SK-N-SH (cell line): ENCODE measurements at regions of chr17 and their contacts with region 1.

Region 1: GRCh38 chr17:66727639-66728570 is 107.0 kb upstream of the CACNG5 start:
- DNase-seq: peak; percentile 87
- H3K4me3 ChIP-seq: no peak overlapping the region; a peak in 1 of 4 replicates
- H3K27ac ChIP-seq: peak overlapping the region in 1 of 2 experiments; percentile 36; a peak in 2 of 4 replicates
- H3K4me1 ChIP-seq: peaks cover 9 to 25% of the 10 kb centered on the region in 2 experiments; a peak in 1 of 4 replicates
- H3K27me3 ChIP-seq: no peaks in the 10 kb centered on the region
- CTCF ChIP-seq: peak; percentile 70
- EP300 ChIP-seq: no peak
- RAD21 ChIP-seq: peak; percentile 93

Region 2: DNA sequence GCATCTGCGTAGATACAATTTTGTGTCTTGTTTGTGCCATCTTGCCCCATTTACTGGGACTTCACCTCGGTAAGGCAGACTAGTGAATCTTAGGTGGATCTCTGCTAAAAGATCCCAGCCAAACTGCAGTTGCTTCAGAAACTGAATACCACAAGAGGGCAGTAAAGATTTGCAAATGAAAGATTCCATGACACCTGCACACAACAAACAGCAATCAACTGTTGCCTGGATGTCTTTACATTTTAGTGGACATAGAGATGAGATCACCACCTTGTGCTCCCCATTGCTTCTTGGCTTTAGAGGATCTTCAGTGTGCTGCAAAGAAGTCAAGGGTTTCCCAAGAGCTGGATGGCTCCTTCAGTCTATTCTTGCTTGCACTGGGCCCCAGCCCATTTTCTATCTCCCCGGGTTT is 12.2 kb before region 1 on chr17:
- CTCF ChIA-PET with region 1: interaction called, 35 read pairs
- POLR2A ChIA-PET with region 1: no interaction called
- DNase-seq: peak; percentile 74
- H3K4me3 ChIP-seq: no peak overlapping the region
- H3K27ac ChIP-seq: no peak overlapping the region
- H3K4me1 ChIP-seq: peaks cover 0 to 22% of the 10 kb centered on the region in 2 experiments; a peak in 1 of 4 replicates
- H3K27me3 ChIP-seq: no peaks in the 10 kb centered on the region
- CTCF ChIP-seq: peak; percentile 82
- EP300 ChIP-seq: peak in 1 of 2 experiments; percentile 16; a peak in 1 of 4 replicates
- RAD21 ChIP-seq: peak; percentile 98

Region 3: GRCh38 chr17:66829386-66829864 is 101.5 kb after region 1 on chr17:
- CTCF ChIA-PET with region 1: interaction called, 12 read pairs
- POLR2A ChIA-PET with region 1: no interaction called
- DNase-seq: no peak
- H3K4me3 ChIP-seq: no peak overlapping the region
- H3K27ac ChIP-seq: no peak overlapping the region
- H3K4me1 ChIP-seq: peaks cover 4 to 19% of the 10 kb centered on the region in 2 experiments; a peak in 2 of 4 replicates
- H3K27me3 ChIP-seq: peaks cover 23% of the 10 kb centered on the region
- CTCF ChIP-seq: no peak
- EP300 ChIP-seq: no peak
- RAD21 ChIP-seq: no peak

Region 4: GRCh38 chr17:66879612-66880011 is 151.7 kb after region 1 on chr17:
- CTCF ChIA-PET with region 1: interaction called, 10 read pairs
- POLR2A ChIA-PET with region 1: no interaction called
- DNase-seq: no peak
- H3K4me3 ChIP-seq: no peak overlapping the region
- H3K27ac ChIP-seq: no peak overlapping the region
- H3K4me1 ChIP-seq: no peaks in the 10 kb centered on the region
- H3K27me3 ChIP-seq: 0 out of 2 replicates have a peak, but pooled peaks cover 16% of the 10 kb centered on the region
- CTCF ChIP-seq: no peak
- EP300 ChIP-seq: no peak
- RAD21 ChIP-seq: no peak

Region 5: DNA sequence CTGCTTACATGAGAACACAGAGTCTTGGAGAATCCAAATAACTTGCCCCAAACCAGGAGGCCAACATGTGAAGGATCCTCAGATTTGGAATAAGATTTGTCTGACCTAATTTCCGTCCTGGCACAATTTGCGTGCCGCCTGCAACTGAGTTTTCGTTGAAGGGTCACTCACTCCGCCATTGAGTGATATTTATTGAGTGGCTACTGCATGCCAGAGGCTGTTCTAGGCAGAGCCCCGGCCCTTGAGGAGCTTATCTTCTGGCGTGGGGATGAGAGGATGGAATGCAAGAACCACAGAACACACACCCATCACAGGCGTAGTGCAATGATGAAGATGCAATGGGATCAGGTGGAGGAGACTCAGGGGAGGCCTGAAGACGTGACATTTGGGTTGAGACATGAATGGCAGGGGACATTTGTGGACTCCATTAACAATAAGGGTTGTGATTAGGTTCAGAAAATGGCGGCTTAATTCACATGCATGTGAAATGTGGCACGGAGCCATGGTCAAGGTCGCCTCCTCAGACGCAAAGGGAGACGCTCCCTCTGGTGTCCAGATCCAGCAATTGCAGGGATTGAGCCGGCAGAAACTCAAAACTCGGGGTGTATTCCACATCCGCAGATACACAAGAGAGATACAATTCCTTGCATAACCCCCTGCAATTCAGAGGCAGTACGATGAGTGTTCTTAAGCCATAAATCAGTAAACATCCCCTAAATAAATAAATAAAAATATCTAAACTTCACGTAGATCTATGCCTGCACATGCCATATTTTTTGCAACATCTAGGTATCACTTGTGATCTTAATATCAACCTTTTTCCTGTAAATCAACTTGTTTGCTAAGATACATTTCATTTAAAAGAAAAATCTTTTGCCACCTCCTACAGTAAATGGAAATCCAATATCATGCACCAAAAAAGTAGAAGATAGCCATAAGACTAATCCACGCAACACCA is 178.7 kb after region 1 on chr17:
- CTCF ChIA-PET with region 1: interaction called, 460 read pairs
- POLR2A ChIA-PET with region 1: interaction called, 6 read pairs
- DNase-seq: peak; percentile 87
- H3K4me3 ChIP-seq: no peak overlapping the region; a peak in 1 of 4 replicates
- H3K27ac ChIP-seq: no peak overlapping the region; a peak in 1 of 4 replicates
- H3K4me1 ChIP-seq: peaks cover 9 to 20% of the 10 kb centered on the region in 2 experiments; a peak in 3 of 4 replicates
- H3K27me3 ChIP-seq: no peaks in the 10 kb centered on the region; the same call in 1 of the 2 replicates
- CTCF ChIP-seq: peak; percentile 98
- EP300 ChIP-seq: peak in 1 of 2 experiments; percentile 26; a peak in 1 of 4 replicates
- RAD21 ChIP-seq: peak; percentile 95